Cardiac septum (tissue), 1 donor: ENCODE measurements at regions of chr17 and their contacts with region 1.

Region 1: GRCh38 chr17:75632863-75633485 is at the start of gene SMIM5:
- DNase-seq: peak; percentile 94
- total RNA-seq, gene SMIM5: 1.7 TPM

Region 2: GRCh38 chr17:75652915-75653549 is 20.1 kb after region 1 on chr17:
- intact Hi-C with region 1: loop called (anchors 2 kb)
- DNase-seq: no peak

Region 3: DNA sequence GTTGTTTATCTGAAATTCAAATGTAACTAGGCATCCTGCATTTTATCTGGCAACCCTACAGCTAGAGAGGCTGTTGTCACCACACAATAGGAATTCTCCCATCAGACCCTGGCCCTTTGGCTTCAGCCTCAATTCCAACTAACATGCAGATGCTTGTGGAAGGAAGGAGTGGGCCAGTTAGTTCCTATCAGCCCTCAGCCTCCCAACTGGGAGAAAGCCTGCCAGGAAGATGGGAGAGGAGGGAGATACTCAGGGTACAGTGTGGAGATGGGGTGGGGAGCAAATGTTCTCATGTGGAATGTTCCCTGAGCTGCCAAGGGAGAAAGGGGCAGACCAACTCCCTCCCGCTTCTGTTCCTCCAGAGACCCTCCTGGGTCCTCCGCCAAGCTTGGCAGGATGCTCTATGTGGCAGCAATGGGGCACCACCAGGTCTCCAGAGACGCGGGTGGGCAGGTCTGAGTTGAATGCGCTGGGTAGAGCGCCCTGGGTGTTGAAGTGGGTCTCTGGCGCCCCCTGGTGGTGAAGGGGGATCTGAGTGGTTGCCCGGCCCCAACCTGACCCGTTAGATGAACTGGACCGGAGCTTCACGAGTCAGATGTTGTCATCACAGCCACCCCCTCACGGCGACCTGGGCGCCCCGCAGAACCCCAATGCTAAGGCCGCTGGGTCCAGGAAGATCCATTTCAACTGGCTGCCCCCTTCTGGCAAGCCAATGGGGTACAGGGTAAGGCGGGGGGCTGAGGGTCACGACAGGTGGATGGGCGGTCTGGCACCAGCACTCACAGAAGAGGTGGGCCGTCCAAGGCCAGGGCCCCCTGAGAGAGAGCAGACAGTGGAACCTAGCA is 116.8 kb after region 1 on chr17:
- intact Hi-C with region 1: loop called (anchors 1 kb)
- DNase-seq: peak; percentile 95